Esophagus squamous epithelium (tissue), 5 donors: ENCODE measurements at regions of chr10 and their contacts with region 1.

Region 1: GRCh38 chr10:73879296-73880173 is 5.2 kb upstream of the CAMK2G start:
- DNase-seq: peak; percentile 40
- H3K4me3 ChIP-seq: no peak overlapping the region
- H3K27ac ChIP-seq: peak overlapping the region; percentile 15 to 47 (median 40)
- H3K4me1 ChIP-seq: peaks cover 19 to 41% (median 25%) of the 10 kb centered on the region in 3 donors
- H3K27me3 ChIP-seq: no peaks in the 10 kb centered on the region
- CTCF ChIP-seq: peak; percentile 94 to 97 (median 96)
- POLR2A ChIP-seq: no peak

Region 2: GRCh38 chr10:73848821-73849489 is 30.6 kb before region 1 on chr10:
- intact Hi-C with region 1: loop called (anchors 5 kb)
- DNase-seq: peak; percentile 32
- H3K4me3 ChIP-seq: no peak overlapping the region
- H3K27ac ChIP-seq: peak overlapping the region; percentile 51 to 84 (median 82)
- H3K4me1 ChIP-seq: peaks cover 5 to 36% (median 9%) of the 10 kb centered on the region in 3 donors
- H3K27me3 ChIP-seq: no peaks in the 10 kb centered on the region
- CTCF ChIP-seq: peak; percentile 99 to 100 (median 99)
- POLR2A ChIP-seq: no peak

Region 3: GRCh38 chr10:74021248-74022055 is 141.9 kb after region 1 on chr10:
- intact Hi-C with region 1: no loop called
- DNase-seq: no peak
- H3K4me3 ChIP-seq: no peak overlapping the region
- H3K27ac ChIP-seq: peak overlapping the region in 1 of 4 donors; percentile 21
- H3K4me1 ChIP-seq: peaks cover 3 to 65% (median 22%) of the 10 kb centered on the region in 3 donors
- H3K27me3 ChIP-seq: no peaks in the 10 kb centered on the region
- CTCF ChIP-seq: no peak
- POLR2A ChIP-seq: no peak